Activated CD8-positive, alpha-beta memory T cell treated with anti-CD3 and anti-CD28 coated beads, Interleukin-2, amount 10 ng/mL, durations not matched to agents 7 days and 5 days (primary cell): ENCODE measurements at regions of chr2 and their contacts with region 1.

Region 1: DNA sequence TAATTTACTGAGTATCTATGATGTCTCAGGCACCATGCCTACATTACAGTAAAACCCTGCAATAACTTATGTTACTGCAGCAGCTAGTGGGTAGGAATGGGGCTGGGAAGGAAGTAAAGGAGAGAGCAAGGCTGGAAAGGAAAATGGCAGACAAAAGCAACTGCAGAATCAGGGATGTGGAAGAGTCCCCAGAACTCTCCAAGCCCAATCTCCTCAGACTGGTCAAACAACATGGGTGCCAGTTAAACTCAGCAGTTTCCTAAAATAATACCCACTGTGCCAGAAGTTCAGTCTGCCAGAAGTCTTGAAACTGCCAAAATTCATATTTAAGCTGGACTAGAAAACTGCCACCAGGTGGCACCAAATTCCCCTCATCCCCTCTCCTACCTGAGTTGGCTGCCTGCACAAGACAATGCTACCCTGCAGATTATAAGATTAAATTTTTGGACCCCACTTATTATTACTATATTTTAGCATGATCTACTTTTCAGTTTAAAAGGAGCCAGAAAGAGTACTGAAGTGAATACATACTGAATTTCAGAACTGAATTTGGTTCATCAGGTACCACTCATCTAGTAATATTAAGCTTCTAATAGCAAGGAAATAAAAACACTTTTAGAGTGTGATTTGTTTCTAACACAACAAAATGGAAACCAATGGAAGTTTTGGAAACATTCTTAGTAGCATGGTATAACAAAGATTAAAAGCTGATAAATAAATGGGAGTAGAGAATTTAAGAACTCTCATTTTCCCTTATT is 86.8 kb upstream of the DNER start:
- DNase-seq: peak; percentile 81
- ATAC-seq: peak; percentile 70
- H3K4me3 Mint-ChIP-seq: no peak overlapping the region
- H3K27ac Mint-ChIP-seq: peak overlapping the region; percentile 46
- H3K4me1 Mint-ChIP-seq: no peaks in the 10 kb centered on the region
- H3K27me3 Mint-ChIP-seq: no peaks in the 10 kb centered on the region

Region 2: DNA sequence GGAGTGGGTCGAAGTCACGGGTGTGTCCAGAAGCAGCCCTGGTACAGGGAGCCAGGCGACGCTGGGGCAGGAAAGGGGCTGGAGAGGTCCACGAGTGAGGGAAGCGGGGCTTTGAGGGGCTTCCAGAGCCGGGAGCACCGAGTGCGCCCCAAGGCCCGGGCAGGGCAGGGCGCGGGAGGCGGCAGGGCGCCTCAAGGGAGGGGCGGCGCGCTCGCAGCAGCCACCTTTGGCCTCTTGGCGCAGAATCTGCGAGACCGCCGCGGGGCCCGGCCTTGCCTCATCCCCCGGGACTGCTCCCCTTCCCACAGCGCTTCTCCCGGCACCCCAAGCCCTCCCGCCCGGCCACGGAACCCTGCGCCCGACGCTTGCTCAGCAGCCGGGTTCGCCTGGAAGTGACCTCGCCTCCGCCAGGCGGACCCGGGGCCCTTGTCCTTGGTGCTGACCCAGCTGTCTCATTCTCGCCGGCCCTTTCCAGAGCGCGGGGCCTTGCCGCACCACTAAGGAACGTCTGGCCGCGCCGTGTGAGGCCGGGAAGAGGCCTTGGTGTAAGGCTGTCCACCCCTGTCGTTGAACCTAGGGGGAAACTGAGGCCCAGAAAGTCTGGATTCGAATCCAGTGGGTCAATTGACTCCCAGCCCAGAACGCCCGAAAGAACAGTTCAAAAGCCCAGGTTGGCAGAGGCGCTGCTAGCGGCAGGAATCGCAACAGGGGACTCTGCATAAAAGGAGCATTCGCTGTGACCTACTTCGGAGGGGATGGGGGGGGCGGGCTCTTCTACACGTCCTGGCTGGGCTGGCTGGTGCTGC is 86.2 kb before region 1 on chr2:
- CTCF ChIA-PET with region 1: no interaction called
- DNase-seq: peak; percentile 61
- ATAC-seq: peak; percentile 53
- H3K4me3 Mint-ChIP-seq: peak overlapping the region; percentile 13
- H3K27ac Mint-ChIP-seq: no peak overlapping the region
- H3K4me1 Mint-ChIP-seq: peaks cover 8% of the 10 kb centered on the region
- H3K27me3 Mint-ChIP-seq: peaks cover 77% of the 10 kb centered on the region

Region 3: GRCh38 chr2:229780856-229781773 is 20.1 kb before region 1 on chr2:
- CTCF ChIA-PET with region 1: interaction called, 14 read pairs
- DNase-seq: no peak
- ATAC-seq: peak; percentile 73
- H3K4me3 Mint-ChIP-seq: no peak overlapping the region
- H3K27ac Mint-ChIP-seq: no peak overlapping the region
- H3K4me1 Mint-ChIP-seq: peaks cover 19% of the 10 kb centered on the region
- H3K27me3 Mint-ChIP-seq: no peaks in the 10 kb centered on the region

Region 4: DNA sequence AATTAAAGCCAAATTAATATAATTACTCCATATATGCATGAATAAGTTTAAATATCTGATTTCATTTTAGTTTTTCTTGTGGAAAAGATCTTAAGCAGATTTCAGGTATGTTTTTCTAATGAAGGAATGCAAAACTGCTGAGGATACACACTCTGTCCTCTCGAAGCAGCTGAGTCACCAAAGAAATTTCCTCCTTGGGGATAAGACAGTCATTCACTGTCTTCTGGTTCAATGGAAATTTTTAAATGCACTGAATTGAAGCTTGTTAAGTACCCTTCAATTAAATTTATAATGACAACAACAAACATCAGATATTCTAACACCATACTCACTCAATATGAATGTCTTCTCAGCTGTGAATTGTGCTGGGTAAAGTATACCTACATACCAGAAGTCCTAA is 14.7 kb after region 1 on chr2:
- CTCF ChIA-PET with region 1: interaction called, 12 read pairs
- DNase-seq: no peak
- ATAC-seq: no peak
- H3K4me3 Mint-ChIP-seq: no peak overlapping the region
- H3K27ac Mint-ChIP-seq: no peak overlapping the region
- H3K4me1 Mint-ChIP-seq: peaks cover 8% of the 10 kb centered on the region
- H3K27me3 Mint-ChIP-seq: no peaks in the 10 kb centered on the region

Region 5: GRCh38 chr2:229821316-229821715 is 20.1 kb after region 1 on chr2:
- CTCF ChIA-PET with region 1: interaction called, 12 read pairs
- DNase-seq: no peak
- ATAC-seq: no peak
- H3K4me3 Mint-ChIP-seq: no peak overlapping the region
- H3K27ac Mint-ChIP-seq: peak overlapping the region; percentile 33
- H3K4me1 Mint-ChIP-seq: peaks cover 33% of the 10 kb centered on the region
- H3K27me3 Mint-ChIP-seq: no peaks in the 10 kb centered on the region

Region 6: GRCh38 chr2:229910832-229911412 is 109.7 kb after region 1 on chr2:
- CTCF ChIA-PET with region 1: interaction called, 37 read pairs
- DNase-seq: peak; percentile 49
- ATAC-seq: peak; percentile 74
- H3K4me3 Mint-ChIP-seq: no peak overlapping the region
- H3K27ac Mint-ChIP-seq: peak overlapping the region; percentile 65
- H3K4me1 Mint-ChIP-seq: peaks cover 40% of the 10 kb centered on the region
- H3K27me3 Mint-ChIP-seq: no peaks in the 10 kb centered on the region

Region 7: DNA sequence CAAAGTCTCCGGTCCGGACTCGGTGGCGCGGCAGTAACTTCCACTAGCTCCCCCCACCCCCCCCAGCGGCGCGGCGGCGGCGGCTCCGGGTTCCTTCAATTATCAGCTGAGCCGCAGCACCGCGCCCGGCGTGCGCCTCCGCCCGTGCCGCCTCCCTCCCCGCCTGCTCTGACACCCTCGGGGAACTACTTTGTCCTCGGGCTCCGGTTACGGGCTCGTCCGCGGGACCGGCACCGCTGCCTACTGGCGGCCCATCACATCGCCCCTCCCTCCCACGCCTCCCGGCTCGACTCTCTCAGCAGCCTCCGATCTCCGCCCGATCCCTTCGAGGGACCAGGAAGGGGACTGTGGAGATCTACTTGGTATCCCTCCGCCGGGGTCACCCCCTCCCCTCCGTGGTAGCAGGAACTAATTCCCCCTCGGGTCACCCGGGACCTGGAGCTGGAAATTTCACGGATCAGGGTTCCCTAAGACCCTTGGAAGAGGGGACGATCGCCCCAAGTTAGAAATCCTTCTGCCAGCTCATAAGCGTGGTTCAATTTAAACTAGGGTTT is 120.8 kb after region 1 on chr2 and contains the start of gene TRIP12:
- CTCF ChIA-PET with region 1: interaction called, 11 read pairs
- DNase-seq: peak; percentile 92
- ATAC-seq: peak; percentile 82
- H3K4me3 Mint-ChIP-seq: peak within 1 kb of the TSS; percentile 99
- H3K27ac Mint-ChIP-seq: peak within 1 kb of the TSS; percentile 99
- H3K4me1 Mint-ChIP-seq: peaks cover 47% of the 10 kb centered on the region
- H3K27me3 Mint-ChIP-seq: no peaks in the 10 kb centered on the region
- total RNA-seq, gene TRIP12: 235 to 270 TPM